Sigmoid colon (tissue), 7 donors: ENCODE measurements at regions of chr16 and their contacts with region 1.

Region 1: GRCh38 chr16:19502395-19503131 is 19.3 kb downstream of the GDE1 start:
- DNase-seq: peak; percentile 77
- H3K4me3 ChIP-seq: no peak overlapping the region
- H3K27ac ChIP-seq: no peak overlapping the region
- H3K4me1 ChIP-seq: no peaks in the 10 kb centered on the region
- H3K27me3 ChIP-seq: no peaks in the 10 kb centered on the region
- CTCF ChIP-seq: peak; percentile 12 to 66 (median 55)
- EP300 ChIP-seq: no peak
- POLR2A ChIP-seq: no peak

Region 2: DNA sequence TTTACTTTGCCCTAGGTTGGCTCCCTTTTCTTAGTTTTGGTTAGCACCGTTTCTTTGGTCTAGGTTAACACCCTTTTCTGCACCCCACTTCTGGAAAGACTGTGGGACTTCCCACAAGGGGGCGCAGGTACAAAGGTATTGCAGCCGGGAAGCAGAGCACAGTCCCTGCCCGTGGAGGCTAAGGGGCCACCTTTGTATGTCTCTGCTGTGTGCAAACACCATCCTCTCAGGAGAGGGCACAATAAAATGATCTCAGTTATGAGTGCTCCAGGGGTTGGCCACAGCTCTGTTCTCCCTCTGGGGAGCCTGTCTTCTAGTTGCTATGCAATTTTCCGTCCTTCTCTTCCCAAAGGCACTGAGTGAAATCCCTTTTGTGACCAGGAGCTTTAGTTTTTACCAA is 113.3 kb before region 1 on chr16:
- intact Hi-C with region 1: loop called (anchors 5 kb)
- DNase-seq: no peak
- H3K4me3 ChIP-seq: no peak overlapping the region
- H3K27ac ChIP-seq: no peak overlapping the region
- H3K4me1 ChIP-seq: peaks cover 0 to 3% (median 0%) of the 10 kb centered on the region in 4 donors
- H3K27me3 ChIP-seq: peaks cover 0 to 24% (median 0%) of the 10 kb centered on the region in 3 donors
- CTCF ChIP-seq: peak in 1 of 4 experiments; percentile 29
- EP300 ChIP-seq: no peak
- POLR2A ChIP-seq: no peak